GM10248 (cell line): ENCODE measurements at regions of chr2 and their contacts with region 1.

Region 1: GRCh38 chr2:15577071-15577735 is 14.5 kb upstream of the DDX1 start:
- DNase-seq: peak; percentile 65
- CTCF ChIP-seq: peak; percentile 93

Region 2: DNA sequence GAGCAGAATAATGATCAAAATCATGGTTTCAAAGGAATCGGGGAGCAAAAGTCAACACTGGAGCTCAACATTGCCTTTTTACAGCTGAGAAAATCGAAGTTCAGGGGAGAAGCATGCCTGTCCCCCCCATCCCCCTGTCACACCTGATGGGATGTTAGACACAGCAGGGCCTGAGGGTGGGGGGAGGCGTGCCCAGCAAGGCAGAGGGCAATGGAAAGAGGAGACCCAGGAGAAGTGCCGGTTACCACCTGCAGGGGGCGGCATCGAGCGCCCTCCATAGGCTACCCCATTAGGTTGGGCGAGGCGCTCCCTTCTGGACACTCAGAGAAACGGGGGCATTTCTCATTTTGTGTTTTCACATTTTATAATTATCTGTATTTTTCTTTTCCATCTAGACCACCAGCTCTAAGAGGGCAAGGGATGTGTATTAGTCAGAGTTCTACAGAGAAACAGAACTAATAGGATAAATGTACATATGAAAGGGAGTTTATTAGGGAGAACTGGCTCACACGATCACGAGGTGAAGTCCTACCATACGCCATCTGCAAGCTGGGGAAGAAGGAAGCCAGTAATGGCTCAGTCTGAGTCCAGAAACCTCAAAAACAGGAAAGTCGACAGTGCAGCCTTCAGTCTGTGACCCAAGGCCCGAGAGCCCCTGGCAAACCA is 673.4 kb before region 1 on chr2:
- CTCF ChIA-PET with region 1: interaction called, 47 read pairs
- POLR2A ChIA-PET with region 1: no interaction called
- DNase-seq: peak; percentile 83
- CTCF ChIP-seq: peak; percentile 90

Region 3: GRCh38 chr2:15560988-15561573 is 16.1 kb before region 1 on chr2 and contains the start of gene NBAS:
- CTCF ChIA-PET with region 1: interaction called, 43 read pairs
- POLR2A ChIA-PET with region 1: no interaction called
- DNase-seq: peak; percentile 86
- CTCF ChIP-seq: no peak

Region 4: GRCh38 chr2:15591692-15592463 is 14.7 kb after region 1 on chr2 and contains the start of gene DDX1:
- CTCF ChIA-PET with region 1: interaction called, 150 read pairs
- POLR2A ChIA-PET with region 1: no interaction called
- DNase-seq: peak; percentile 91
- CTCF ChIP-seq: no peak

Region 5: GRCh38 chr2:15599994-15600393 is 22.8 kb after region 1 on chr2:
- CTCF ChIA-PET with region 1: interaction called, 150 read pairs
- POLR2A ChIA-PET with region 1: no interaction called
- DNase-seq: no peak
- CTCF ChIP-seq: no peak

Region 6: GRCh38 chr2:15704086-15704787 is 127.0 kb after region 1 on chr2:
- CTCF ChIA-PET with region 1: no interaction called
- POLR2A ChIA-PET with region 1: no interaction called
- DNase-seq: no peak
- CTCF ChIP-seq: no peak